WTC11 (cell line): ENCODE measurements at regions of chr9 and their contacts with region 1.

Region 1: DNA sequence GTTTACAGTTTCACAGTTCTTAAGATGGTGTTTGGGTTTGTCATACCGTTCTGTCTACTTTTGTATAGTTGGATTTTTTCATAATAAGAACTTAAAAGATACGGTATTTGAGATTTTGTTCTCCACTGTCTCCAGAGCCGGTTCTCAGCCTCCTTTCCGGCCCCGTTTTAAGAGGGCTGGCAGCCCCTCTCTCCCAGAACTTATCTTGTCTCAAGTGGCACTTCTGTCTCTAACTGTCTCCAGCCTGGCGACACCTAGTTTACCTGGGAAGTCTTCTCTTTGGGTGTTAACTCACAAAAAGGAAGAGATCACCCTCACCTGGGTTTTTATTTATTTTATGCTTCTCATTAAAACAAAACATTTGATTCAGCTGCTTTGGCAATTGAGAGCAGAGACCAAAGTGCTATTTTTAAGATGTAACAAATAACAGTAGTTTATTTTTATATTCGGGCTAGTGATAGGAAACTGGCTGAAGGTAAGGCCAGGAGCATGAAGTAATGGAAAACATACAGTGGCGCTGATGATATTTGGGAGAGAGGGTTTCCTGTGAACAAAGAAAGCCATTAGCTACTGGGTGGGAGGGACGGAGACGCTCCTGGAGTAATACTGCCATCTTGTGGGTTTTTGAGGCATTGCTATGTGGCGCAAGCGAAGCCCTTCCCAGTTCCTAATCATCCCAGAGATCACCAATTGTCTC is 48.3 kb downstream of the ACER2 start:
- DNase-seq: peak; percentile 69
- ATAC-seq: peak; percentile 93
- H3K4me3 Mint-ChIP-seq: no peak overlapping the region
- H3K27ac Mint-ChIP-seq: peak overlapping the region; percentile 44; the same call in 1 of the 2 replicates
- H3K4me1 Mint-ChIP-seq: peaks cover 31% of the 10 kb centered on the region
- H3K27me3 Mint-ChIP-seq: no peaks in the 10 kb centered on the region
- CTCF ChIP-seq: peak; percentile 90

Region 2: GRCh38 chr9:19085295-19085694 is 371.8 kb before region 1 on chr9:
- CTCF ChIA-PET with region 1: interaction called, 14 read pairs
- POLR2A ChIA-PET with region 1: no interaction called
- DNase-seq: no peak
- ATAC-seq: peak; percentile 71
- H3K4me3 Mint-ChIP-seq: no peak overlapping the region
- H3K27ac Mint-ChIP-seq: no peak overlapping the region
- H3K4me1 Mint-ChIP-seq: no peaks in the 10 kb centered on the region
- H3K27me3 Mint-ChIP-seq: no peaks in the 10 kb centered on the region
- CTCF ChIP-seq: 0 out of 2 replicates have a peak, but pooled peaks have one; percentile 24

Region 3: GRCh38 chr9:19441730-19442129 is 15.4 kb before region 1 on chr9:
- CTCF ChIA-PET with region 1: interaction called, 15 read pairs
- POLR2A ChIA-PET with region 1: interaction called, 3 read pairs
- DNase-seq: no peak
- ATAC-seq: no peak
- H3K4me3 Mint-ChIP-seq: no peak overlapping the region
- H3K27ac Mint-ChIP-seq: peak overlapping the region; percentile 68
- H3K4me1 Mint-ChIP-seq: peaks cover 30% of the 10 kb centered on the region
- H3K27me3 Mint-ChIP-seq: no peaks in the 10 kb centered on the region
- CTCF ChIP-seq: no peak